A549 (cell line): ENCODE measurements at regions of chr14 and their contacts with region 1.

Region 1: DNA sequence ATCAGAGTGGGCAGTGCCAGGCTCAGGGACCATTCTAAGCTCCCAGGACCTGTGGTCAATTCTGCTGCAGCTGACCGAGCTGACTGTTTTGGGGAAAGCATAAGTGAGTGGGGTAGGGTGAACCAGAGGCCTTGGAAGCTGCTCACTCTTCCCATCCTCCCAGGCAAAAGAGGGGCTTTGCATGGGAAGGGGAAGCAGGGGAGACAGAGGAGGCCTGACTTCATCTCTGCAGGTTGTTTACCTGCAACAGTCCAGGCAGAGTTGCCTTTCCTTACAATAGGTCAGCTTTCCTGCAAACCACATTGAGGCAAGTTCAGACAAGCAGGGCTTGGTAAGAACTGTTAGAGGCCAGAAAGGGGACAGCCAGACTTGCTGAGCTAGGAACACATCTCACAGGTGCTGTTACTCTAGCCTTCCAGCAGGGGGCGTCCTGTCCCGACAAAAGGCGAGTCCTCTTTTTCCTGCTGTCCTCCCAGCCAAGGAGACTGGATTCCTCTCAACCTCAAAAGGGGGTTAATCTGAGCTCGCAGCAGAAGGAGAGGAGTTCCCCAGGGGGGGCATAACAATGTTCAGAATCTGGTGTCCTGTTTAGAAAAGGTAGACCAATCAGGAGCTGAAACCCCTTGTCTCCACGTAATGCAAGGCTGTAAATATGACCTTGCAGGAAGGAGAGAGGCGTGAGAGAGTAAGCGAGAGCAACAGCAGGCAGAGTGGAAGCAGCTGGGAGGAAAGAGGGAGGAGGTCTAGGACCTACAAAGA is 4.3 kb upstream of the DHRS2 start:
- DNase-seq: peak; percentile 73 to 75
- ATAC-seq: peak; percentile 78 to 90
- H3K4me3 ChIP-seq: no peak overlapping the region
- H3K27ac ChIP-seq: 0 out of 6 replicates have a peak overlapping the region, but pooled peaks of 1 of the 2 experiments have one; percentile 38
- H3K4me1 ChIP-seq: no peaks in the 10 kb centered on the region
- CTCF ChIP-seq: peak; percentile 78
- EP300 ChIP-seq: no peak
- POLR2A ChIP-seq: no peak
- RAD21 ChIP-seq: peak; percentile 71 to 81

Region 2: DNA sequence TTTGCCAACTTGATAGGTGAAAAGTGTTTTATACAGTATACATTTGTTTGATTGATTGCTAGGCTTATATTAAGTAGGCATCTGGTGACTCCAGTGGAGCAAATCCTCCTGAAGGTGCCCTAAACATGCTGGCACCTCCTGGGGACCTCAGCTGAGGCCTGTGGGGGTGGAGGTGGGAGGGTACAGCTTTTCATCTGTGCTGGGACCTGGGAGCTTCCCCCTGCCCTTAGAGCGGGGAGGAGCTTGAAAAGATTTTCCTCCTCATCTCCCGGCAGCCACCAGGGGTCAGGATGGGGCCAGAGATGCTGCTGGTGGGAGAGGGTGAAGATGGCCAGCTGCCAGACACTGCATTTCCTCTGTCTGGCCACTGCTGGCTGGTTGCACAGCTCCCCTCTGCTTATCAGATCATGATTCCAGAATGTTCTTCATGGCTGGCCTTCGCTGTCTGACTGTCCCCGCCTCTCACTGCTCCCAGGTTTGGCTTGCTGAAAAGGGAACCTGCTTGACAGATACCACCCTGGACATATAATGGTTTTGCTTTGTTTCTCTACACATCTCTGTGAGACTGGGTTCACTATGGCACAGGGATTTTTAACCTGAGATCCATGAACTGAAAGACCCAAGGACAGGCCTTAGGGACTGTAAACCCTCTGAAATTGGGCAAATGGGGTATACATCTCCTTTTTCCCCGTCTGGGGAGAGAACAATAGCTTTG is 42.8 kb before region 1 on chr14:
- CTCF ChIA-PET with region 1: interaction called, 14 read pairs
- POLR2A ChIA-PET with region 1: no interaction called
- DNase-seq: peak; percentile 88 to 90
- ATAC-seq: peak; percentile 99 to 100
- H3K4me3 ChIP-seq: no peak overlapping the region
- H3K27ac ChIP-seq: peak overlapping the region in 1 of 2 experiments; percentile 65; a peak in 2 of 6 replicates
- H3K4me1 ChIP-seq: peaks cover 8% of the 10 kb centered on the region; the same call in 2 of the 3 replicates
- CTCF ChIP-seq: peak; percentile 77
- EP300 ChIP-seq: no peak
- POLR2A ChIP-seq: no peak
- RAD21 ChIP-seq: peak; percentile 82 to 87

Region 3: GRCh38 chr14:23613242-23614070 is 18.4 kb before region 1 on chr14:
- CTCF ChIA-PET with region 1: interaction called, 25 read pairs
- POLR2A ChIA-PET with region 1: no interaction called
- DNase-seq: no peak
- ATAC-seq: no peak
- H3K4me3 ChIP-seq: no peak overlapping the region
- H3K27ac ChIP-seq: no peak overlapping the region
- H3K4me1 ChIP-seq: peaks cover 11% of the 10 kb centered on the region; the same call in 2 of the 3 replicates
- CTCF ChIP-seq: no peak
- EP300 ChIP-seq: no peak
- POLR2A ChIP-seq: no peak
- RAD21 ChIP-seq: no peak

Region 4: GRCh38 chr14:23646648-23647549 is 15.0 kb after region 1 on chr14:
- CTCF ChIA-PET with region 1: interaction called, 71 read pairs
- POLR2A ChIA-PET with region 1: no interaction called
- DNase-seq: peak in 1 of 2 experiments; percentile 28
- ATAC-seq: peak; percentile 58 to 75; a peak in 4 of 6 replicates
- H3K4me3 ChIP-seq: no peak overlapping the region
- H3K27ac ChIP-seq: peak overlapping the region; percentile 41 to 64; a peak in 3 of 6 replicates
- H3K4me1 ChIP-seq: peaks cover 10% of the 10 kb centered on the region
- CTCF ChIP-seq: no peak
- EP300 ChIP-seq: no peak
- POLR2A ChIP-seq: no peak
- RAD21 ChIP-seq: no peak

Region 5: GRCh38 chr14:23727566-23728335 is 95.9 kb after region 1 on chr14:
- CTCF ChIA-PET with region 1: interaction called, 20 read pairs
- POLR2A ChIA-PET with region 1: no interaction called
- DNase-seq: peak; percentile 63 to 66
- ATAC-seq: peak; percentile 84 to 94
- H3K4me3 ChIP-seq: no peak overlapping the region
- H3K27ac ChIP-seq: no peak overlapping the region
- H3K4me1 ChIP-seq: no peaks in the 10 kb centered on the region
- CTCF ChIP-seq: peak; percentile 71
- EP300 ChIP-seq: no peak
- POLR2A ChIP-seq: no peak
- RAD21 ChIP-seq: peak; percentile 75 to 86